GM12878 (cell line): ENCODE measurements at regions of chr16 and their contacts with region 1.

Region 1: DNA sequence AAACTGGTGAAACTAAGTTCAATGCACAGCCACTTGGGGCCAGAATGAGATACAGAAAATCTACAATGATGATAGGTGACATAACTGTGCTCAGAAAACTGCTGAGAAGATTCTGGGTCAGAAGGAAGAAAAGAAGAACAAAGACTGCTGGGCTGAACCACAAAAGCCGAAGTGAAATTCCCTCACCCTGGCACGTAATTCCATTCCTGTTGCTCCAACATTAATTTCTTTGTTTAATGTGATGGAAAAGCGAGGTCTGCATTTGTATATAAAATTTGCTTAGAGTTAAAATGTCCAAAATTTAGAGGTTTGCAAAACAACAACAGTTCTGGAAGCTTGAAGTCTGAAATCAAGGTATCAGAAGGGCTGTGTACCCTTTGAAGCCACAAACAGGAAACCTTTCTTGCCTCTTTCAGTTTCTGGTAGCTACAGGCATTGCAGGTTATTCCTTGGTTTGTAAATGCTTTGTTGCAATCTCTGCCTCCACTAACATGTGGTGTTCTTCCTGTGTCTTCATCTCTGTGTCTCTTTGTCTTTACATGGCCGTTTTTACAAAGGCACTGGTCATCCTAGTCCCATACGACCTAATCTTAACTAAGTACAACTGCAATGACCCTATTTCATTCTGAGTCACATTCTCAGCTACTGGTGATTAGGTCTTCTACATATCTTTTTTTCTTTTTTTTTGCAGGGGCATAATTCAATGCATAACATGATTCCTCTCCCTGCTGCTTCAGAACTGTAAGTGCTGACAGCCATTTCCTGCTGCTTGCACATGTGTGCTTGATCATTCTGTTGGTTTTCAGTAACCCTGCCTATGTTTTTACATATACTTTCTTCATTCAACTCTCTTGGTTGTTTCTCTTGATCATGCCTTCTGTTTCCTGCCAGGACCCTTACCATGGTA is 603.0 kb upstream of the CDH8 start:
- DNase-seq: peak; percentile 83
- ATAC-seq: peak; percentile 92
- H3K4me3 ChIP-seq: peak overlapping the region; percentile 29; the same call in 1 of the 2 replicates
- H3K27ac ChIP-seq: peak overlapping the region; percentile 82
- H3K4me1 ChIP-seq: peaks cover 16% of the 10 kb centered on the region
- H3K27me3 ChIP-seq: no peaks in the 10 kb centered on the region
- CTCF ChIP-seq: peak in 2 of 3 experiments; percentile 29 to 43; a peak in 4 of 6 replicates
- EP300 ChIP-seq: peak; percentile 5 to 29; a peak in 2 of 4 replicates
- POLR2A ChIP-seq: no peak
- RAD21 ChIP-seq: peak; percentile 71

Region 2: DNA sequence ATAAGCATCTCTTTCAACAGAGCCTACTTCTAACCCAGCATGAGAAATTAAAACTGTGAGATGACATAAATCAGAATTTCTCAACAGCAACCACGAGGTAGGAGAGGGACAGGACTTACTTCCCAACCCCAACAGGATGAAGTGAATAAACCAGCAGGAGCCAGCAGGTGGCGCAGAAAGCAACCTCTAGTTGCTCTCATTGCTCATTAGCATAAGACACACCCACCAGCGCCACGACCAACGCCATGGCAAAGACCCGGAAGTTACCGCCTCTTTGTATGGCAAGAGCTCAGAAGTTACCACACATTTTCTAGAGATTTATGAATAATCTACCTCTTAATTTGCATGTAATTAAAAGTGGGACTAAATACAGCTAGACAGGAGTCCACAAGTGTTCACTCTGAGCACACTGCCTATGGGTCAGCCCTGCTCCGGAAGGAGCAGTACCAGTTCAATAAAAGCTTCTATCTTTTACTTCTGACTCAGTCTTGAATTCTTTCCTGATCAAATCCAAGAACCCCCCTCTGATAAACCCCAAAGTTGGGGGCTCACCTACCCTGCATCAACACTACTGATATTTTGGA is 413.4 kb before region 1 on chr16:
- CTCF ChIA-PET with region 1: no interaction called
- POLR2A ChIA-PET with region 1: no interaction called
- RAD21 ChIA-PET with region 1: interaction called, 3 read pairs
- SMC1A ChIA-PET with region 1: no interaction called
- in situ Hi-C with region 1: no loop called
- intact Hi-C with region 1: loop called (anchors 2 kb)
- DNase-seq: peak; percentile 24
- ATAC-seq: peak; percentile 100
- H3K4me3 ChIP-seq: no peak overlapping the region
- H3K27ac ChIP-seq: no peak overlapping the region
- H3K4me1 ChIP-seq: no peaks in the 10 kb centered on the region
- H3K27me3 ChIP-seq: no peaks in the 10 kb centered on the region
- CTCF ChIP-seq: peak; percentile 46 to 61 (median 53); a peak in 4 of 6 replicates
- EP300 ChIP-seq: no peak
- POLR2A ChIP-seq: no peak
- RAD21 ChIP-seq: peak; percentile 53; the same call in 1 of the 2 replicates

Region 3: DNA sequence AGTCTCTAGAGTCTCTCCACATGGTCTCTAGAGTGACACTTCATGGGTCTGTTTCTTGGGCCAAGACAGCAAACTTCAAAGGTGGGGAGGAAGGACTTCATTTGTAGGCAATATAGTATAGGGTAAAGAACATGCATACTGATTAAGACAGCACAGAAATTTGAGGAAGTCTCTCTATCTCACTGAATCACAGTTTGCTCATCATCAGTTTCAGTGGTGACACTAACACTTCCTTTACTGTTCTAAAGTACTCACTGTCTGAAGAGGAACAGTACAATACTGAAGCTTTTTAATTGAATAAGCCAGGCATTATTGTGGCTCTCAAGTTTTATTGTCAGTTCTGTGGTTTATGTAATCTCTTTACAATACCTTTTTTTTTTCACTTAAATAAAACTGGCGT is 53.5 kb after region 1 on chr16:
- CTCF ChIA-PET with region 1: no interaction called
- POLR2A ChIA-PET with region 1: no interaction called
- RAD21 ChIA-PET with region 1: interaction called, 4 read pairs
- SMC1A ChIA-PET with region 1: interaction called, 6 read pairs
- in situ Hi-C with region 1: no loop called
- intact Hi-C with region 1: loop called (anchors 5 kb)
- DNase-seq: peak; percentile 34
- ATAC-seq: peak; percentile 100
- H3K4me3 ChIP-seq: no peak overlapping the region
- H3K27ac ChIP-seq: no peak overlapping the region
- H3K4me1 ChIP-seq: no peaks in the 10 kb centered on the region
- H3K27me3 ChIP-seq: no peaks in the 10 kb centered on the region
- CTCF ChIP-seq: no peak
- EP300 ChIP-seq: peak in 1 of 2 experiments; percentile 48; a peak in 1 of 4 replicates
- POLR2A ChIP-seq: no peak
- RAD21 ChIP-seq: no peak